Posterior vena cava (tissue), 2 donors: ENCODE measurements at regions of chr6 and their contacts with region 1.

Region 1: DNA sequence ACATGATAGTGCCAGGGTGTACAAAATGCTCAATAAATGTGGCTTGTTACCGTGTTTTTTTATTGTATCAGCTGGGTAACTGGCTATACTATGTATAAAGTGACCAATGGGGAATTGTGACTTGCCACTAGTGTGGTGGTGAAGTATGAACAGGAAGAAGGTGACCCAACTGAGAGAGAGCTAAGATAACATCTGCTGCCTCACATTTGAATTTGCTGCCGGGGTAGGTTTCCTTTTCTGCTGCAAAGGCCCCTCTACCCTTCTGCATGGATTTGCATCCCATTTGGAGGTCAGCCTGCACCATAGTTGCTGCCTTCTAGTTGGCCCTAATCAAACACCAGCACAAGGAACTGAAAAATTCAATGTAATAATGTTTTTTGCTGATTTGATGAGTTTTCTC is 24.1 kb downstream of the IL17A start:
- DNase-seq: no peak

Region 2: DNA sequence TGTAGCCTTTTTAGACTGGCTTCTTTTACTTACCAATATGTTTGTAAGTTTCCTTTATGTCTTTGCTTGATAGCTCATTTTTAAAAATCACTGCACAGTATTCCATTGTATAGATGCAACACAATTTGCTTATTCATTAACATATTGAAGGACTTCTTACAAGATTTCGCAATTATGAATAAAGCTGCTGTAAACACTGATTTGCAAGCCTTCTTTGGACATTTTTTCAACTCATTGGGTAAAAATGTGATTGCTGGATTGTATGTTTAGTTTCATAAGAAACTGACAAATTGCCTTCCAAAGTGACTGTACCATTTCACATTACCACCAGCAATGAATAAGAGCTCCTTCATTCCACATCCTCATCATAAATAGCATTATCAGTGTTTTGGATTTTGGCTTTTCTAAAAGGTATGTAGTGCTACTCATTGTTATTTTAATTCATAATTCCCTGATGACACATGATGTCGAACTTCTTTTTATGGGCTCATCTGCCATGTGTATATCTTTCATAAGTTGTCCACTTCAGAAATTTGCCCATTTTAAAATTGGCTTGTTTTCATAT is 1310.8 kb before region 1 on chr6:
- intact Hi-C with region 1: loop called in 1 of 2 experiments (anchors 5 kb)
- DNase-seq: no peak

Region 3: GRCh38 chr6:52475307-52475706 is 265.1 kb after region 1 on chr6:
- intact Hi-C with region 1: no loop called
- DNase-seq: no peak